Right cardiac atrium (tissue), 5 donors: ENCODE measurements at regions of chr6 and their contacts with region 1.

Region 1: DNA sequence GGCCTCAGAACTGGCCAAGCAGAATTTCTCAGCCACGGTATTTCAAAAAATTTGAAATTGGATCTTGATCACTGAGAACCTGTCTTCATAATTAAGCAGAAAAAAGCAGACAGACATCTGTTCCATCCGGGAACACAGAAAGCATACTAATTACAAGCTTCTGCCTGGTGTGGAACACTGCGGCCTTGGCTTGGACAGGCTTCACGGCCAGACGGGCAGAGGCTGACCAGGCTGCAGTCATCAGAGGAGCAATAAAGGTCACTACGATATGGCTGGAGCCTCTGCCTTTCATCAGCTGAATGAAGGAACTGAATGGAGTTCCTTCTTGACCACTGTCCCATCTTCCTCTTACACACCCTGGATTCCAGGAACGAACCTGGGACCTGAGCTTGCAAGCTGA is 3.9 kb upstream of the NRSN1 start:
- DNase-seq: no peak
- ATAC-seq: no peak
- H3K4me3 ChIP-seq: no peak overlapping the region
- H3K27ac ChIP-seq: no peak overlapping the region
- H3K4me1 ChIP-seq: no peaks in the 10 kb centered on the region
- H3K27me3 ChIP-seq: peaks cover 6% of the 10 kb centered on the region

Region 2: GRCh38 chr6:23584124-23584763 is 537.9 kb before region 1 on chr6:
- intact Hi-C with region 1: loop called in 1 of 4 experiments (anchors 5 kb)
- DNase-seq: no peak
- ATAC-seq: no peak
- H3K4me3 ChIP-seq: no peak overlapping the region
- H3K27ac ChIP-seq: no peak overlapping the region
- H3K4me1 ChIP-seq: no peaks in the 10 kb centered on the region
- H3K27me3 ChIP-seq: no peaks in the 10 kb centered on the region

Region 3: DNA sequence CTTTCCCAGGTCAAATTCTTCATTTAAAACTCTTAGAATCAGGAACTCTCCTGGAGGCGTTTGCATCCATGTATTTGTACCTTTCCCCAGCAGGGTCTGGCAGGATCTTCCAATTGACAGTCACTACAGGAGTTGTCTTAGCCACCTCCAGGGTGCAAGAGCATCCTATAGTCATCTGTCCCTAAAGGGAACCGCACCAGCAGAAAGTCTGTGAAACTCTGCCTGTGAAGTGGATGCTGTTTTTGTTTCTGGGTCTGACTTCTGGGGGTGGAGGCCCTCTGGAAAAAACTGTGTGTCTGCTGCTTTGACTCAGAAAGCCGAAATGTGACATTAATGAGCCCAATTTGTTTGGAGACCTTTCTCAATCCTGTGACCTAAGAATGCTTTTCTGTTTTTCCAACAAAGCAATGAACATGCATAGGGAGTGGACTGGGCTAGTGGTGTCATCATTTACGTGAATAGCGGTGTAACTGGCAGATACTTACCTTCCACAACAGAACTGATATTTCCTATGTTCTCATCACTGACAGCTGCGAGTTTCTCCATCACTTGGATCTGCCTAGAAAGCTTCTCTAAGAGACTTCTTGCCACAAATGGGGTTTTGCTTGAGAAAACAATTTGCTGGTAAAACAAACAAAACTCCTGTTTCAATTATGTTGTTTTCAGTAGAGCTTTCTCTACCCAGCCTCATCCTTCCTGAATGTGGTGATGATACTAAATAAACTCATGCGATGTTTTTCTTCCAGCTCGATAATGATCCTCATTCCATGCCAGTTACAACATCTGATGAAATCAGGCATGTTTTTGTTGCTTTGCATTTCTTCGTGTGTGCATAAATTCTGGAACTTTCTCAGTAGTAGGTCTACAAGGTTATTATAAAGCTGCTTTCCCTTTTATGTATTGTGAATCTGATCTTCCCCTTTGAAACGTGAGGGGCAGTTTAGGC is 709.9 kb after region 1 on chr6:
- intact Hi-C with region 1: no loop called
- DNase-seq: no peak
- ATAC-seq: no peak
- H3K4me3 ChIP-seq: no peak overlapping the region
- H3K27ac ChIP-seq: no peak overlapping the region
- H3K4me1 ChIP-seq: no peaks in the 10 kb centered on the region
- H3K27me3 ChIP-seq: no peaks in the 10 kb centered on the region